HAP-1 (cell line): ENCODE measurements at regions of chr17 and their contacts with region 1.

Region 1: GRCh38 chr17:14545156-14545906 is 244.4 kb downstream of the HS3ST3B1 start:
- DNase-seq: no peak
- H3K4me3 ChIP-seq: no peak overlapping the region
- H3K4me1 ChIP-seq: no peaks in the 10 kb centered on the region
- H3K27me3 ChIP-seq: no peaks in the 10 kb centered on the region

Region 2: DNA sequence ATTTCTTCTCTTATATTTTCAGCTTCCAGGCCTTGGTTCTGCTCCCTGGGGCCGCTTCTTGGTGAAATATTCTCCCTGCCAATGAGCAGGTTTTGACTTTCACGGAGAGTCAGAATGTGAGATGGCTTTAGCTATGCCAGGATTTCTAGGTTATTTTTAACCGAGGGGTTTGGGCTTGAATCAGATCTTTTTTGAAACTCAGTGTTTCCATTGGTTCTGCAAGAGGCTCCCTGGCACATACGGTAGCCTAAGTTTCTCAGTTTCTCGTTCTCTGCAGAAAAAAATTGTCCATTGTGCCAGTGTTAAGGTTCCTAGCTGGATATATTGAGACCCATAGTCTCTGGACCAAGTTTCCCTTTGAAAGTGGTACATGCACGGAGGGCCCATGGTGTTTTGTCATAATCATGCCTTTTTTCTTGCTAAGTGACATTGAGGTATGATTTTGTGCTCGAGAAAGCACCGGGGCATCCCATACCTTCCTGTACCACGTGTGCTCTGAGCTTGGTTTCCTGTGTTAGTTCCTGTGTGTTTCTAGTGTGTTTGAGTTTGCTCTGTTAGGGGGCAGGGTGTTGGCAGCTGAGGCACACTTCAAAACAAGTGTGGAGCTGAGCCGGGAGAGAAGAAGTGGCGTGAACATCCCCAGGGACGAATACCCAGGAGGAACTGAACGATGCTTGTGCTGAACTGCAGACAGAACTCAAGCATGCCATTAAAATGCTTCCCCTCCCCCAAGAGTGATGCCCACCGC is 117.3 kb before region 1 on chr17:
- in situ Hi-C with region 1: loop called (anchors 25 kb)
- DNase-seq: no peak
- H3K4me3 ChIP-seq: no peak overlapping the region
- H3K4me1 ChIP-seq: no peaks in the 10 kb centered on the region
- H3K27me3 ChIP-seq: no peaks in the 10 kb centered on the region

Region 3: GRCh38 chr17:14712611-14713021 is 167.3 kb after region 1 on chr17:
- in situ Hi-C with region 1: no loop called
- DNase-seq: no peak
- H3K4me3 ChIP-seq: no peak overlapping the region
- H3K4me1 ChIP-seq: no peaks in the 10 kb centered on the region
- H3K27me3 ChIP-seq: no peaks in the 10 kb centered on the region